ENCODE measurements at regions of chr7 and their contacts with region 1.

Region 1: GRCh38 chr7:116786791-116787443 is 75.5 kb upstream of the CAPZA2 start:
- DNase-seq: peak; percentile 63
- H3K4me3 Mint-ChIP-seq: no peak overlapping the region
- H3K27ac Mint-ChIP-seq: no peak overlapping the region
- H3K4me1 Mint-ChIP-seq: no peaks in the 10 kb centered on the region
- H3K27me3 Mint-ChIP-seq: peaks cover 3% of the 10 kb centered on the region

Region 2: GRCh38 chr7:116560021-116560970 is 226.6 kb before region 1 on chr7:
- CTCF ChIA-PET with region 1: no interaction called
- intact Hi-C with region 1: no loop called
- DNase-seq: no peak
- H3K4me3 Mint-ChIP-seq: no peak overlapping the region
- H3K27ac Mint-ChIP-seq: no peak overlapping the region
- H3K4me1 Mint-ChIP-seq: no peaks in the 10 kb centered on the region
- H3K27me3 Mint-ChIP-seq: peaks cover 37% of the 10 kb centered on the region

Region 3: DNA sequence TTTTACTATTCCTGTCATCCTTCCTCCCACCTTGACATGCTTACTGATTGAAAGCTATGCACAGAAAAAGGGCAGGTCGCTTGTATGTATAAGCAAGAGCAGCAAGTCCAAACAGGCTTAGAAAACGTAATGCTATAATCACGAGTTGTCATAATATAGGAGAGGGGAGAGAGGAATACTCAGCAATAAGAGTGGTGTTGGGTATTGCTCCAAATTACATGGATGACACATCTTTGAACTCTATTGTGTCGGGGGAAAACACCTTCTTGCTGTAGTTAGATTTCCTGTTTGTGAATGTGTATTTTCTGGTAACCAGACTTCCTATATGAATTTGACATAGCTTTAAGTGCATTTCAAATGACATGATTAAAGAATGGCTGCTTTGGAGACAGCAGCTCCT is 107.4 kb before region 1 on chr7:
- CTCF ChIA-PET with region 1: no interaction called
- intact Hi-C with region 1: loop called (anchors 1 kb)
- DNase-seq: no peak
- H3K4me3 Mint-ChIP-seq: no peak overlapping the region
- H3K27ac Mint-ChIP-seq: no peak overlapping the region
- H3K4me1 Mint-ChIP-seq: peaks cover 6% of the 10 kb centered on the region
- H3K27me3 Mint-ChIP-seq: peaks cover 25% of the 10 kb centered on the region

Region 4: GRCh38 chr7:116802746-116803152 is 15.8 kb after region 1 on chr7:
- CTCF ChIA-PET with region 1: interaction called, 6 read pairs
- intact Hi-C with region 1: loop called (anchors 1 kb)
- DNase-seq: peak; percentile 49
- H3K4me3 Mint-ChIP-seq: no peak overlapping the region
- H3K27ac Mint-ChIP-seq: no peak overlapping the region
- H3K4me1 Mint-ChIP-seq: peaks cover 5% of the 10 kb centered on the region
- H3K27me3 Mint-ChIP-seq: peaks cover 14% of the 10 kb centered on the region

Region 5: GRCh38 chr7:116872026-116872425 is 85.1 kb after region 1 on chr7:
- CTCF ChIA-PET with region 1: no interaction called
- intact Hi-C with region 1: no loop called
- DNase-seq: no peak
- H3K4me3 Mint-ChIP-seq: no peak overlapping the region
- H3K27ac Mint-ChIP-seq: peak overlapping the region; percentile 83
- H3K4me1 Mint-ChIP-seq: peaks cover 71% of the 10 kb centered on the region
- H3K27me3 Mint-ChIP-seq: no peaks in the 10 kb centered on the region